ENCODE measurements at regions of chr9 and their contacts with region 1.

Region 1: GRCh38 chr9:122125158-122125508 is 32.0 kb upstream of the TTLL11 start:
- DNase-seq: peak; percentile 87
- ATAC-seq: peak; percentile 88

Region 2: GRCh38 chr9:122346478-122347362 is 221.6 kb after region 1 on chr9:
- intact Hi-C with region 1: loop called (anchors 5 kb)
- DNase-seq: peak; percentile 74
- ATAC-seq: peak; percentile 77

Region 3: GRCh38 chr9:122453677-122454135 is 328.6 kb after region 1 on chr9:
- intact Hi-C with region 1: loop called (anchors 5 kb)
- DNase-seq: no peak
- ATAC-seq: no peak